ENCODE measurements at regions of chr17 and their contacts with region 1.

Region 1: DNA sequence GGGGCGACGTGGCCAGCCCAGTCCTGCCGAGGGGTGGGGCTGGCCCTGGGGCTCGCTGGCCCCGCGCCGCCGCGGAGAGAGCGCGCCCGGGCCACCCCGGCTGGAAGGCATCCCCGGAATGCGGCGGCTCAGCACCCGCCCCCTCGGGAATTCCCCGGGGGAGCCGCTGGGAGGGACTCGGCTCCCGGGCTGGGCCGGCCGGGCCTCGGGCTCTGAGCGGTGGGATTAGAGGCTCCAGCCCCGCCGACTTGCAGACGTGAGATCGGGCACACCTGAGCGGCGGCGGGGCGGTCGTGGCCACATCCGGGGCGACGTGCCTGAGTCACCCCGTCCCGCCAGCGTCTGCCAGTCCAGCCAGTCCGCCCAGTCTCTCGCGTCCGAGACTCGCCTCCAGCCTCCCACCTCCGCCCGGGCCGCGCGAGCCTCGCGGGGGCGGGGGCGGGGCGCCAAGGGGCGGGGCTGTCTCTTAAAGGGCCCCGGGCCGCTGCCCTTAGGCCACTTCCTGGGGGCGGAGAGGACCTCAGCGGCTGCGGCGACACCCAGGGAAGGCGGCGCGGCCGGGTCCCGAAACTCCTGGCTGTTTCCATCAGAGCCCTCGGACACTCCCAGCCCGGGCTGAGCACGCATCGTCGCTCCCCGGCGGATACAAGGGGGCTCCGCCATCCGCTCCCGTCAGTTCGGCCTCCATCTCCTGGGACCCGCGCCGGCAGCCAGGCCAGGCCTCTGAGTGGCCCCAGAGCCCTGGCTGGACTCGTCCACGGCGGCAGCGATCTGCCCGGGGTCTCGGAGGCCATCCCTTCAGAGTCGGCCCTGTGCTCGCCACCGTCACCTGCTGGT is at the start of gene KCTD11:
- DNase-seq: peak; percentile 89
- H3K4me3 ChIP-seq: peak within 1 kb of the TSS; percentile 69 to 97
- H3K27ac ChIP-seq: peak within 1 kb of the TSS; percentile 88 to 99
- H3K4me1 ChIP-seq: peaks cover 19 to 48% of the 10 kb centered on the region in 2 experiments; a peak in 2 of 4 replicates
- H3K27me3 ChIP-seq: no peaks in the 10 kb centered on the region
- CTCF ChIP-seq: no peak
- EP300 ChIP-seq: peak in 1 of 2 experiments; percentile 14; a peak in 1 of 4 replicates
- RAD21 ChIP-seq: no peak
- polyA plus RNA-seq, gene KCTD11: 9.5 and 12.1 TPM in 2 replicates

Region 2: DNA sequence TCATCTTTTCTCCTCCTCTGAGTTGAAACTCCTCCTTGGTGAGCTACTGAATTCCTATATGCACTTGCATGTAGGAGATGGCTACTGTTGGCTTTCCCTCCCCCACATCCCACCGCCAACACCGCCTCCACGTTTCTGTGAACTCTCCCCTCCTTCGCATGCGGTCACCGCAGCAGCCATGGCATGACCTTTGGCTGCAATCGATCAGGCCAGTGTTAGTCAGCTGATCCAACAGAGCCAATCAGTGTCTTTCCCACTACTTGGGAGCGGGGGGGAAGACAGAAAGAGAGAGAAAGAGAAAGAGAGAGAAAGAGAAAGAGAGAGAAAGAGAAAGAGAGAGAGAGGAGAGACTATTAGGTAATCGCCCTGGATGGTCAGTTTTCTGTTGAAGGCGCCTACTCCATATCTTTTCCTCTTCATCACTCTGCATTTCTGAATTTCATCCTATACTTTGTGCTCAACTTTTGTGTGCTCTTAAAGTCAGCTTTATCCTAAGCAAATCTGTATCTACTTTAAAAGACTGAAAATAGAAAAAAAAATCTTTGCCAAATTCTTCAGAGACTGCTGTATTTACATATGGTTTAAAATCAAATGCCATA is 195.4 kb before region 1 on chr17:
- CTCF ChIA-PET with region 1: no interaction called
- POLR2A ChIA-PET with region 1: no interaction called
- DNase-seq: no peak
- H3K4me3 ChIP-seq: no peak overlapping the region
- H3K27ac ChIP-seq: no peak overlapping the region
- H3K4me1 ChIP-seq: no peaks in the 10 kb centered on the region
- H3K27me3 ChIP-seq: peaks cover 88% of the 10 kb centered on the region
- CTCF ChIP-seq: no peak
- EP300 ChIP-seq: no peak
- RAD21 ChIP-seq: no peak

Region 3: DNA sequence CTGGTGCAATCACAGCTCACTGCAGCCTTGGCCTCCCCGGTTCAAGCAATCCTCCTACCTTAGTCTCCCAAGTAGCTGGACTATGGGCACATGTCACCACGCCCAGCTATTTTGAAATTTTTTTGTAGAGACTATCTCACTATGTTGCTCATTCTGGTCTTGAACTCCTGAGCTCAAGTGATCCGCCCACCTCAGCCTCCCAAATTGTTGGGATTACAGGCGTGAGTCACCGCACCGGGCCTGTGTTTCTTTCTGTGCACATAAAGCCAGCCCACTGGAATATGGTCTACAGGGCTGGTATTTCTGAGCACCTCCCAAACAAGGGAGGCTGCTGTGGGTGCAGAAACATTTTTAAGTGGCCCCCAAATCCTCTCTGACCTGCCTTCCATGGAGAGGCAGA is 11.4 kb after region 1 on chr17:
- CTCF ChIA-PET with region 1: interaction called, 40 read pairs
- POLR2A ChIA-PET with region 1: interaction called, 3 read pairs
- DNase-seq: no peak
- H3K4me3 ChIP-seq: no peak overlapping the region
- H3K27ac ChIP-seq: no peak overlapping the region
- H3K4me1 ChIP-seq: no peaks in the 10 kb centered on the region
- H3K27me3 ChIP-seq: no peaks in the 10 kb centered on the region
- CTCF ChIP-seq: no peak
- EP300 ChIP-seq: no peak
- RAD21 ChIP-seq: no peak

Region 4: GRCh38 chr17:7394452-7395191 is 42.7 kb after region 1 on chr17 and contains the start of gene PLSCR3:
- CTCF ChIA-PET with region 1: interaction called, 13 read pairs
- POLR2A ChIA-PET with region 1: no interaction called
- DNase-seq: peak; percentile 98
- H3K4me3 ChIP-seq: peak within 1 kb of the TSS; percentile 79 to 92
- H3K27ac ChIP-seq: peak within 1 kb of the TSS; percentile 85 to 91
- H3K4me1 ChIP-seq: peaks cover 0 to 9% of the 10 kb centered on the region in 2 experiments; a peak in 1 of 4 replicates
- H3K27me3 ChIP-seq: no peaks in the 10 kb centered on the region
- CTCF ChIP-seq: peak; percentile 39
- EP300 ChIP-seq: no peak
- RAD21 ChIP-seq: no peak
- polyA plus RNA-seq, gene PLSCR3: 72.0 and 95.0 TPM in 2 replicates

Region 5: GRCh38 chr17:7444682-7445618 is 93.1 kb after region 1 on chr17 and contains the start of gene CHRNB1:
- CTCF ChIA-PET with region 1: interaction called, 11 read pairs
- POLR2A ChIA-PET with region 1: no interaction called
- DNase-seq: peak; percentile 94
- H3K4me3 ChIP-seq: peak within 1 kb of the TSS in 1 of 2 experiments; percentile 17; a peak in 1 of 4 replicates
- H3K27ac ChIP-seq: peak within 1 kb of the TSS in 1 of 2 experiments; percentile 39; a peak in 1 of 4 replicates
- H3K4me1 ChIP-seq: peaks cover 7 to 17% of the 10 kb centered on the region in 2 experiments; a peak in 2 of 4 replicates
- H3K27me3 ChIP-seq: no peaks in the 10 kb centered on the region
- CTCF ChIP-seq: no peak
- EP300 ChIP-seq: no peak
- RAD21 ChIP-seq: no peak
- polyA plus RNA-seq, gene CHRNB1: 26.8 and 29.7 TPM in 2 replicates

Region 6: GRCh38 chr17:7515911-7516610 is 164.2 kb after region 1 on chr17:
- CTCF ChIA-PET with region 1: interaction called, 29 read pairs
- POLR2A ChIA-PET with region 1: no interaction called
- DNase-seq: no peak
- H3K4me3 ChIP-seq: no peak overlapping the region
- H3K27ac ChIP-seq: no peak overlapping the region
- H3K4me1 ChIP-seq: no peaks in the 10 kb centered on the region
- H3K27me3 ChIP-seq: no peaks in the 10 kb centered on the region
- CTCF ChIP-seq: no peak
- EP300 ChIP-seq: no peak
- RAD21 ChIP-seq: no peak

Region 7: DNA sequence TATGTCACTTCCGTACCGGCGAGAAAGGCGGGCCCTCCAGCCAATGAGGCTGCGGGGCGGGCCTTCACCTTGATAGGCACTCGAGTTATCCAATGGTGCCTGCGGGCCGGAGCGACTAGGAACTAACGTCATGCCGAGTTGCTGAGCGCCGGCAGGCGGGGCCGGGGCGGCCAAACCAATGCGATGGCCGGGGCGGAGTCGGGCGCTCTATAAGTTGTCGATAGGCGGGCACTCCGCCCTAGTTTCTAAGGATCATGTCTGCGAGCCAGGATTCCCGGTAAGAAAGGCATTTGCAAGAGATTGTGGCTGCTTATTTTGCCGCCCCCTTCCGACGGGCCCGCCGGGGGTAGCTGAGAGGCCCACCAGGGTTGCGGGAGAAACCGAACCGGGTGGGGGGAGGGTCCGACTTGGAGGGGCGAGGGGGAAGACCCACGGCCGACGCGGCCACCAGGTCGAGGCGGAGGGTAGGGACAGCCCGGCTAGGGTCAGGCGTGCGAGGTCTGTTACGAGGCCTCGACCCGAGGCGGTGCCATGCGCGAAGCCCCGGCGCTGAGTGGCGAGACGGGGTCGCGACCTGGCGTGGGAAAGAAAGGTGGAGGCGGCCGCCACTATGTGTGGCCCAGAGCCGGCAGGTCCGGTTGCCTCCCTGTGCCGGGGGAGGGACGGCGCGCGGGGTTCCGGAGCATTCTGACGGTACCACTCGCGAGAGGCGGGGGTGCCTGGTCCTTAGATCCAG is 220.9 kb after region 1 on chr17:
- CTCF ChIA-PET with region 1: no interaction called
- POLR2A ChIA-PET with region 1: no interaction called
- DNase-seq: peak; percentile 97
- H3K4me3 ChIP-seq: peak overlapping the region; percentile 98 to 100
- H3K27ac ChIP-seq: peak overlapping the region; percentile 92
- H3K4me1 ChIP-seq: peaks cover 16 to 33% of the 10 kb centered on the region in 2 experiments
- H3K27me3 ChIP-seq: no peaks in the 10 kb centered on the region
- CTCF ChIP-seq: no peak
- EP300 ChIP-seq: no peak
- RAD21 ChIP-seq: no peak